ENCODE measurements at regions of chr11 and their contacts with region 1.

Region 1: GRCh38 chr11:123020968-123021367 is 39.3 kb upstream of the BSX start:
- DNase-seq: peak; percentile 58
- ATAC-seq: peak; percentile 91
- H3K4me3 Mint-ChIP-seq: no peak overlapping the region
- H3K27ac Mint-ChIP-seq: no peak overlapping the region
- H3K4me1 Mint-ChIP-seq: peaks cover 2% of the 10 kb centered on the region
- H3K27me3 Mint-ChIP-seq: peaks cover 2% of the 10 kb centered on the region

Region 2: DNA sequence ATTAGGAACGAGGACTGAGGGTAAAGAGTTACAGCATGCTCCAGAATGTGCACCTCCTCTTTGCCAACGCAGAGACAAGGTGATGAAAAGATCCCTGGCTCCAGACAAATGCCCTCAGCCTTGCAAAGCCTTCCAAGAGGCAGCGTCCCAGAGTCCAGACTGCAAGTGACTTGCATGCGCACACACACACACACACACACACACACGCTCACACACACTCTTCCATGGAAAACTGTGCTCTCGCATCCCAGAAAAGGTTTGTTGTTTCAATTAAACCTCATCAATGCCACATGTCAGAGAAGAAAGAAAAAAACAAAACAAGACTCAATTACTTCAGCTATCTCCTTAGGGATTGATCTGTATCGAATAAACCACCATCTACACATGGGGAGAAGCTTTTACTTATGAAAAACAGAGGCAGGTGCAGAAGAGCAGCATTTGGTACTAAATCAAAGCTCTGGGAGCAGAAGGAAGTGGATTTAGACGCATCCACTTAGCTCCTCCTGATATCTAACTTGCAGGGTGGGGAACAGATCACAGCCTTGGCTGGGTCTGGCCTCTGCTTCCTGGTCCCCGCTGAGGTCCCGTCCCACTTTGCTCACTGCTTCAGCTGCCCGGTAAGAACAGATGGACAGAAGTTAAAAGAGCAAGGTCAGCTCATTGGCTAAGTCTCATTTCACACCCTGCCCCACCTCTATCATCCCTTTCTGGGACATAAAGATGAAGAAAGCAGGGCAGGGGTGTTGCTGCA is 655.2 kb before region 1 on chr11:
- CTCF ChIA-PET with region 1: no interaction called
- POLR2A ChIA-PET with region 1: no interaction called
- intact Hi-C with region 1: no loop called
- DNase-seq: no peak
- ATAC-seq: no peak
- H3K4me3 Mint-ChIP-seq: no peak overlapping the region
- H3K27ac Mint-ChIP-seq: no peak overlapping the region
- H3K4me1 Mint-ChIP-seq: no peaks in the 10 kb centered on the region
- H3K27me3 Mint-ChIP-seq: peaks cover 11% of the 10 kb centered on the region

Region 3: GRCh38 chr11:122578168-122578825 is 442.7 kb before region 1 on chr11:
- CTCF ChIA-PET with region 1: interaction called, 9 read pairs
- POLR2A ChIA-PET with region 1: no interaction called
- intact Hi-C with region 1: loop called (anchors 2 to 5 kb)
- DNase-seq: peak; percentile 16
- ATAC-seq: no peak
- H3K4me3 Mint-ChIP-seq: no peak overlapping the region
- H3K27ac Mint-ChIP-seq: no peak overlapping the region
- H3K4me1 Mint-ChIP-seq: peaks cover 8% of the 10 kb centered on the region
- H3K27me3 Mint-ChIP-seq: no peaks in the 10 kb centered on the region

Region 4: GRCh38 chr11:122584670-122585069 is 436.3 kb before region 1 on chr11:
- CTCF ChIA-PET with region 1: interaction called, 9 read pairs
- POLR2A ChIA-PET with region 1: no interaction called
- intact Hi-C with region 1: loop called (anchors 2 to 5 kb)
- DNase-seq: no peak
- ATAC-seq: no peak
- H3K4me3 Mint-ChIP-seq: no peak overlapping the region
- H3K27ac Mint-ChIP-seq: no peak overlapping the region
- H3K4me1 Mint-ChIP-seq: peaks cover 8% of the 10 kb centered on the region
- H3K27me3 Mint-ChIP-seq: peaks cover 2% of the 10 kb centered on the region

Region 5: GRCh38 chr11:122796128-122796717 is 224.7 kb before region 1 on chr11:
- CTCF ChIA-PET with region 1: interaction called, 11 read pairs
- POLR2A ChIA-PET with region 1: no interaction called
- intact Hi-C with region 1: loop called (anchors 1 kb)
- DNase-seq: peak; percentile 84
- ATAC-seq: peak; percentile 91
- H3K4me3 Mint-ChIP-seq: no peak overlapping the region
- H3K27ac Mint-ChIP-seq: no peak overlapping the region
- H3K4me1 Mint-ChIP-seq: peaks cover 2% of the 10 kb centered on the region
- H3K27me3 Mint-ChIP-seq: no peaks in the 10 kb centered on the region

Region 6: DNA sequence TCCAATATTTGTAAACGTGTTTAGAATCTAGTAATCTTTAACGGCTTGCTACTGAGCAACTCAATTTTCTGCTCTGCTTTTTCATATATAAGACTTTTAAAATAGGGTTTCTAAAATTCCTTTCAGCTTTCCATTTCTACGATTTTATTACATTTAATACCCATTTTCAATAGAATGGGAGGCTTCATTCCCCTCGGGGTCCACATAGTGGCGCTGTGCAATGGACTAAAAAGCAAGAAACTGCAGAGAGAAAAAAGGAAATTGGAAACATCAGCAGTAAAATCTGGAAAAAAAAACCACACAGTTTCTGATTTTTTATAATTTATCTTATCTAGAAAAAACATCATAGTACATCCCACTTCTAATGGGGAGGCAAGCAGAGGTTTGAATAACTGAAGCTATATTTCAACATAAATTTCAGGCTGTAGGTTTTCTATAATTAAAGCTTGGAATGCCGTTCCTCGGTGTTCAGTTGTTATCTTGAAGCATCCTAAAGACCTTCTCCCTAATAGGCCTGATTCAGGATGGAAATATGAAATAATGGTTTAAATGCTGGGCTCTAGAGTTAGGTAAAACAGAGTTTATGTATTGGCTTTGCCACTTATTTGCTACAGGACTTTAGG is 157.2 kb before region 1 on chr11:
- CTCF ChIA-PET with region 1: interaction called, 185 read pairs
- POLR2A ChIA-PET with region 1: interaction called, 4 read pairs
- intact Hi-C with region 1: loop called (anchors 1 kb)
- DNase-seq: peak; percentile 71
- ATAC-seq: no peak
- H3K4me3 Mint-ChIP-seq: no peak overlapping the region
- H3K27ac Mint-ChIP-seq: no peak overlapping the region
- H3K4me1 Mint-ChIP-seq: no peaks in the 10 kb centered on the region
- H3K27me3 Mint-ChIP-seq: peaks cover 5% of the 10 kb centered on the region

Region 7: GRCh38 chr11:122910775-122911174 is 110.2 kb before region 1 on chr11:
- CTCF ChIA-PET with region 1: interaction called, 4 read pairs
- POLR2A ChIA-PET with region 1: no interaction called
- intact Hi-C with region 1: loop called (anchors 1 to 2 kb)
- DNase-seq: peak; percentile 19
- ATAC-seq: no peak
- H3K4me3 Mint-ChIP-seq: no peak overlapping the region
- H3K27ac Mint-ChIP-seq: no peak overlapping the region
- H3K4me1 Mint-ChIP-seq: no peaks in the 10 kb centered on the region
- H3K27me3 Mint-ChIP-seq: no peaks in the 10 kb centered on the region

Region 8: GRCh38 chr11:123033895-123034294 is 12.9 kb after region 1 on chr11:
- CTCF ChIA-PET with region 1: interaction called, 12 read pairs
- POLR2A ChIA-PET with region 1: no interaction called
- intact Hi-C with region 1: no loop called
- DNase-seq: peak; percentile 41
- ATAC-seq: no peak
- H3K4me3 Mint-ChIP-seq: no peak overlapping the region
- H3K27ac Mint-ChIP-seq: no peak overlapping the region
- H3K4me1 Mint-ChIP-seq: no peaks in the 10 kb centered on the region
- H3K27me3 Mint-ChIP-seq: no peaks in the 10 kb centered on the region

Measured in activated CD4-positive, alpha-beta T cell treated with anti-CD3 and anti-CD28 coated beads for 36 hours (primary cell).